ENCODE measurements at regions of chr17 and their contacts with region 1.

Region 1: DNA sequence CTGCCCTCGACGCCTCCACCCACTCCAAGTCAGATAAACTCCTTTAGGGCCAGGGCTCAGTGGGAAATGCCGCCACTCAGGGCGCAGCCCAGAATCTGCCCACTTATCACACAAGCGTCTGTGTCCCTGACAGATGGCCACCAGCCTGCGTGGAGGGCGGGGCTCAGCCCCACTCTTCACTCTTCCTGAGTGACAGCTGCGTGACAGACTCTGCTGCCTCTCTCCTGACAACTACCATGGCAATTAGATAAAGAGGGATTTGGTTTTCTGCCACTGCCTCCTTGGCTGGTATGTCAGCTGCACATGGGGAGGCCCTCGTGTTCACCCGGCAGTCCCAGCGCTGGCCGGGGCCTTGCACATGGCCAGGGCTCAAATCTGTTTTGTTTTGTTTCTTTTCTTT is 96.2 kb downstream of the RTN4RL1 start:
- DNase-seq: no peak
- H3K4me3 Mint-ChIP-seq: no peak overlapping the region
- H3K27ac Mint-ChIP-seq: no peak overlapping the region
- H3K4me1 Mint-ChIP-seq: no peaks in the 10 kb centered on the region
- H3K27me3 Mint-ChIP-seq: no peaks in the 10 kb centered on the region

Region 2: DNA sequence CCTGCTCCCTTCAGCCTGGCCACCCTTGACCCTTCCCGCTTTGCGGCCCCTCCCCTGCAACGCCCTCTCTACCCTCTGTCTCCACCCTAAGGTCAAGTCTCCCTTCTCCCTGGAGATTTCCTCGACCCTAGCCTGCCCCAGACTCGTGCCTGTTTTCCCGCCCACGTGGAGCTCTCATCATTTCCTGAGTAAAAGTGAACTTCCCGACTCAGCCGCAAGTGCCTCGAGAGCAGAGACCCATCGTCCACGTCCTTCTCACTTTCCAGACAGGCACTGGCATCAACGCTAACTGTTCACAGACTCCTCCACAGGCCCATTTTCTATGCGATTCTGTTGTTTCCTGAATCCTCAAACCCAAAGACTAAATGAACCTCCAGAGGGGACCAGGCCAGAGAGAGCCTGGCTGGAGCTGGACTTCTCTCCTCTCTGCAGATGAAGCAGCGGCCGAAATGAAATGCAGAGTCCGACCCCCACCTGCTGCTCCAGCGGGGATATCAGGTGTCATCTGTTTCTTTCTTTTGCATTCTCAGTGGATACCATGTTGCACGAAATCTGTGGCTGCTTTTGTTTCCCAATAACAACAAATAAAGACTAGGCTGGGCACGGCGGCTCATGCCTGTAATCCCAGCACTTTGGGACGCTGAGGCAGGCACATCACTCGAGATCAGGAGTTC is 43.6 kb after region 1 on chr17:
- intact Hi-C with region 1: loop called (anchors 10 kb)
- DNase-seq: no peak
- H3K4me3 Mint-ChIP-seq: no peak overlapping the region
- H3K27ac Mint-ChIP-seq: no peak overlapping the region
- H3K4me1 Mint-ChIP-seq: peaks cover 18% of the 10 kb centered on the region
- H3K27me3 Mint-ChIP-seq: peaks cover 12% of the 10 kb centered on the region